Activated T-helper 1 cell treated with anti-CD3 and anti-CD28 coated beads, Interleukin-12 subunit alpha, Interleukin-12 subunit beta, Interleukin-2, Interleukin-4 antibody, amounts not matched to agents 30 ng/mL and 10 ng/mL and 1 ng/mL, durations not matched to agents 14 hours and 24 hours and 36 hours (primary cell): ENCODE measurements at regions of chr4 and their contacts with region 1.

Region 1: GRCh38 chr4:138035781-138036258 is 206.3 kb downstream of the SLC7A11 start:
- DNase-seq: no peak
- H3K4me3 Mint-ChIP-seq: no peak overlapping the region
- H3K27ac Mint-ChIP-seq: no peak overlapping the region
- H3K4me1 Mint-ChIP-seq: no peaks in the 10 kb centered on the region
- H3K27me3 Mint-ChIP-seq: no peaks in the 10 kb centered on the region

Region 2: GRCh38 chr4:137635108-137635507 is 400.7 kb before region 1 on chr4:
- intact Hi-C with region 1: no loop called
- DNase-seq: no peak
- H3K4me3 Mint-ChIP-seq: no peak overlapping the region
- H3K27ac Mint-ChIP-seq: no peak overlapping the region
- H3K4me1 Mint-ChIP-seq: no peaks in the 10 kb centered on the region
- H3K27me3 Mint-ChIP-seq: no peaks in the 10 kb centered on the region

Region 3: DNA sequence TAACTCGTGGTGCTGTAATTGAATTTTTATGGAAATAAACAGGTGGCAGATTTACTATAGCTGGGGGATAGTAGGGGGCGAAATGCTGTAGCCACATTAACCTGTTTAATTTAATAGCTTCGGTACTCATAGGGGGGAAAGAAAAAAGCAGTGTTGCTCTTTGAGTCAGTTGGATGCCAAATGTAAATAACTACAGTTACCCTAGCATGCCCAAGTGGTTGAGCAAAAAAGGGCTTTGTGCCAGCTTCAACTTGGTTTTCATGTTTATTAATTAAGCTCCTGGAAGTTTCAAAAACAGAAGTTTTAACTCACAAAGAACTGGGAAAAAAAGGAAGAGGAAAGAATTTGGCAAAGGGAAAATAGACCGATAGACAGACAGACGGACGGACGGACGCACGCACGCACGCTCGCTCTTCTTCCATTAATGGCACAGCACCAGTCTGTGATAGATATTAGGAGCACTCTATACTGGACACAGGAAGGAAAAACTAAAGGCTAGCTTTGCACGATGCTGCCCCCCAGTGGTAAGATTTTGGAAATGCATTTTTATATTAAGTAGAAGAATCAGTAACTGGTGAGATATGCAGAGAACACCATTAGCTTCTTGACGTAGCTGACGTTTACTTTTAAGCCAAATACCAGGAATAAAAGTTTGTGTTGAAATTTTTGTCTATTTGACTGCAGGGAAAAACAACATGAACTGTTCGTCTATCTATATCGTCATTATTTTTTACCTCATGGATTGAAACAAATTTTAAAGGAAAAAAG is 54.5 kb after region 1 on chr4:
- intact Hi-C with region 1: loop called (anchors 1 kb)
- DNase-seq: peak; percentile 5
- H3K4me3 Mint-ChIP-seq: no peak overlapping the region
- H3K27ac Mint-ChIP-seq: no peak overlapping the region
- H3K4me1 Mint-ChIP-seq: no peaks in the 10 kb centered on the region
- H3K27me3 Mint-ChIP-seq: no peaks in the 10 kb centered on the region

Region 4: GRCh38 chr4:138182838-138183426 is 147.1 kb after region 1 on chr4:
- intact Hi-C with region 1: loop called (anchors 5 kb)
- DNase-seq: no peak
- H3K4me3 Mint-ChIP-seq: no peak overlapping the region
- H3K27ac Mint-ChIP-seq: no peak overlapping the region
- H3K4me1 Mint-ChIP-seq: no peaks in the 10 kb centered on the region
- H3K27me3 Mint-ChIP-seq: no peaks in the 10 kb centered on the region

Region 5: GRCh38 chr4:138222046-138222445 is 186.2 kb after region 1 on chr4:
- intact Hi-C with region 1: no loop called
- DNase-seq: no peak
- H3K4me3 Mint-ChIP-seq: no peak overlapping the region
- H3K27ac Mint-ChIP-seq: no peak overlapping the region
- H3K4me1 Mint-ChIP-seq: no peaks in the 10 kb centered on the region
- H3K27me3 Mint-ChIP-seq: no peaks in the 10 kb centered on the region

Region 6: GRCh38 chr4:138522366-138522765 is 486.5 kb after region 1 on chr4:
- intact Hi-C with region 1: no loop called
- DNase-seq: no peak
- H3K4me3 Mint-ChIP-seq: no peak overlapping the region
- H3K27ac Mint-ChIP-seq: no peak overlapping the region
- H3K4me1 Mint-ChIP-seq: no peaks in the 10 kb centered on the region
- H3K27me3 Mint-ChIP-seq: no peaks in the 10 kb centered on the region

Region 7: GRCh38 chr4:138870737-138871554 is 835.1 kb after region 1 on chr4:
- intact Hi-C with region 1: loop called (anchors 5 kb)
- DNase-seq: peak; percentile 7
- H3K4me3 Mint-ChIP-seq: no peak overlapping the region
- H3K27ac Mint-ChIP-seq: no peak overlapping the region
- H3K4me1 Mint-ChIP-seq: no peaks in the 10 kb centered on the region
- H3K27me3 Mint-ChIP-seq: peaks cover 12% of the 10 kb centered on the region